ENCODE measurements at regions of chr4 and their contacts with region 1.

Region 1: DNA sequence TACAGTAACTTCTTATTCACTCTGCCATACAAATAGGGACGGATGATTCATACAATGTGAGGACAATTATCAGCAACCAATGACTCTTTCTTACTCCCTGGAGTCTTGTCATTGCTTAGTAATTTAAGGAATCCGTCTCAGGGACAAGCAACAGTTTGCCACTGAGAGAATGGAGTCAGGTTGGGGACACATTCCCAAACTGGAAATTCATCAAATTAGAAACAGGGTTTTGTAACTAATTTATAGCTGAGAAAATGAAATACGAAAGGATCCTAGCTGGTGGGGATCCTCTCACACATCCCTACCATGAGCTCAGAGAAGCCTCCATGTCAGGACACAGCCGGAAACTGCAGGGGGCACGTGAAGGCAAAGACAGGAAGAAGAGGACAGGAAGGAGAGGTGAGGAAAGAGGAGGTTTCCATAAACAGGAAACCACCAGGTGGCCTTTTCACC is 50.4 kb upstream of the KDR start:
- DNase-seq: peak; percentile 66
- H3K4me3 ChIP-seq: peak overlapping the region in 1 of 3 experiments; percentile 39
- H3K27ac ChIP-seq: peak overlapping the region; percentile 91
- H3K4me1 ChIP-seq: peaks cover 72% of the 10 kb centered on the region
- H3K27me3 ChIP-seq: no peaks in the 10 kb centered on the region
- CTCF ChIP-seq: no peak
- POLR2A ChIP-seq: no peak

Region 2: GRCh38 chr4:53365486-53366300 is 1810.1 kb before region 1 on chr4 and contains the start of gene SCFD2:
- CTCF ChIA-PET with region 1: no interaction called
- POLR2A ChIA-PET with region 1: no interaction called
- dilution Hi-C with region 1: no loop called
- intact Hi-C with region 1: no loop called
- DNase-seq: peak; percentile 96
- H3K4me3 ChIP-seq: peak within 1 kb of the TSS; percentile 49 to 97 (median 74)
- H3K27ac ChIP-seq: peak within 1 kb of the TSS; percentile 7
- H3K4me1 ChIP-seq: peaks cover 17% of the 10 kb centered on the region
- H3K27me3 ChIP-seq: peaks cover 14 to 19% of the 10 kb centered on the region in 2 experiments
- CTCF ChIP-seq: no peak
- POLR2A ChIP-seq: peak; percentile 67
- total RNA-seq, gene SCFD2: 17.6 and 22.8 TPM in 2 replicates

Region 3: GRCh38 chr4:53721263-53721662 is 1454.5 kb before region 1 on chr4:
- CTCF ChIA-PET with region 1: no interaction called
- POLR2A ChIA-PET with region 1: no interaction called
- dilution Hi-C with region 1: no loop called
- intact Hi-C with region 1: no loop called
- DNase-seq: no peak
- H3K4me3 ChIP-seq: no peak overlapping the region
- H3K27ac ChIP-seq: no peak overlapping the region
- H3K4me1 ChIP-seq: no peaks in the 10 kb centered on the region
- H3K27me3 ChIP-seq: peaks cover 9 to 21% of the 10 kb centered on the region in 2 experiments
- CTCF ChIP-seq: no peak
- POLR2A ChIP-seq: no peak

Region 4: DNA sequence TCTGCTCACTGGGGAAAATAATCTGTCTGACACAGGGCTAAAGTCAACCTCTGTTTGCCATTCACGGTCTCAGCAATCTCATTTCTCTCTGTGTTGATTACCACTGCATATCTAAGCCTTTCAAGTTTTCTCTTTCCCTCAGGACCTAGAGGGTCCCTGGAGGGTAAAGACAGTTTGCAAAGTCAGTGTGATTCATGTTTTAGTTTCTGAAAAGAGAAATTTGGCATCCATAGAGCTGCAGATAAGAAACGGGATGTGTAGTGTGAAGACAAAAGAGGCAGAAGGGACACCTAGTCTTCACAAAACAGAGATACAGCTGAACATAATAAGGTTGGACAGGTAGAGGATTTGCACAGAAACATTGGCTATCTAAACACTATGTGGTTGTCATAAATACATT is 16.0 kb before region 1 on chr4:
- CTCF ChIA-PET with region 1: interaction called, 10 read pairs
- POLR2A ChIA-PET with region 1: no interaction called
- dilution Hi-C with region 1: no loop called
- intact Hi-C with region 1: no loop called
- DNase-seq: peak; percentile 51
- H3K4me3 ChIP-seq: no peak overlapping the region
- H3K27ac ChIP-seq: peak overlapping the region; percentile 42
- H3K4me1 ChIP-seq: peaks cover 28% of the 10 kb centered on the region
- H3K27me3 ChIP-seq: no peaks in the 10 kb centered on the region
- CTCF ChIP-seq: no peak
- POLR2A ChIP-seq: no peak

Measured in endothelial cell of umbilical vein (primary cell).